ENCODE measurements at regions of chr6 and their contacts with region 1.

Region 1: GRCh38 chr6:42928986-42929820 is at the start of gene CNPY3:
- DNase-seq: peak; percentile 97
- ATAC-seq: peak; percentile 75
- H3K4me3 ChIP-seq: peak within 1 kb of the TSS; percentile 86 to 89 (median 87)
- H3K4me3 Mint-ChIP-seq: peak within 1 kb of the TSS; percentile 100
- H3K27ac ChIP-seq: peak within 1 kb of the TSS; percentile 94 to 97
- H3K27ac Mint-ChIP-seq: peak within 1 kb of the TSS; percentile 100
- H3K4me1 ChIP-seq: peaks cover 44 to 49% of the 10 kb centered on the region in 2 donors
- H3K4me1 Mint-ChIP-seq: peaks cover 49% of the 10 kb centered on the region
- H3K27me3 ChIP-seq: no peaks in the 10 kb centered on the region
- H3K27me3 Mint-ChIP-seq: no peaks in the 10 kb centered on the region
- CTCF ChIP-seq: no peak
- total RNA-seq, gene CNPY3: 159 and 163 TPM in 2 replicates

Region 2: GRCh38 chr6:42745707-42746462 is 183.3 kb before region 1 on chr6 and contains the start of gene TBCC:
- CTCF ChIA-PET with region 1: interaction called, 4 read pairs
- POLR2A ChIA-PET with region 1: interaction called, 21 read pairs
- intact Hi-C with region 1: loop called (anchors 1 kb)
- DNase-seq: peak; percentile 96
- ATAC-seq: peak; percentile 74
- H3K4me3 ChIP-seq: peak within 1 kb of the TSS; percentile 81 to 100 (median 90)
- H3K4me3 Mint-ChIP-seq: peak within 1 kb of the TSS; percentile 100
- H3K27ac ChIP-seq: peak within 1 kb of the TSS; percentile 78 to 91
- H3K27ac Mint-ChIP-seq: peak within 1 kb of the TSS; percentile 100
- H3K4me1 ChIP-seq: peaks cover 21 to 28% of the 10 kb centered on the region in 2 donors
- H3K4me1 Mint-ChIP-seq: peaks cover 35% of the 10 kb centered on the region
- H3K27me3 ChIP-seq: no peaks in the 10 kb centered on the region
- H3K27me3 Mint-ChIP-seq: no peaks in the 10 kb centered on the region
- CTCF ChIP-seq: no peak
- total RNA-seq, gene TBCC: 54.6 and 55.7 TPM in 2 replicates

Region 3: DNA sequence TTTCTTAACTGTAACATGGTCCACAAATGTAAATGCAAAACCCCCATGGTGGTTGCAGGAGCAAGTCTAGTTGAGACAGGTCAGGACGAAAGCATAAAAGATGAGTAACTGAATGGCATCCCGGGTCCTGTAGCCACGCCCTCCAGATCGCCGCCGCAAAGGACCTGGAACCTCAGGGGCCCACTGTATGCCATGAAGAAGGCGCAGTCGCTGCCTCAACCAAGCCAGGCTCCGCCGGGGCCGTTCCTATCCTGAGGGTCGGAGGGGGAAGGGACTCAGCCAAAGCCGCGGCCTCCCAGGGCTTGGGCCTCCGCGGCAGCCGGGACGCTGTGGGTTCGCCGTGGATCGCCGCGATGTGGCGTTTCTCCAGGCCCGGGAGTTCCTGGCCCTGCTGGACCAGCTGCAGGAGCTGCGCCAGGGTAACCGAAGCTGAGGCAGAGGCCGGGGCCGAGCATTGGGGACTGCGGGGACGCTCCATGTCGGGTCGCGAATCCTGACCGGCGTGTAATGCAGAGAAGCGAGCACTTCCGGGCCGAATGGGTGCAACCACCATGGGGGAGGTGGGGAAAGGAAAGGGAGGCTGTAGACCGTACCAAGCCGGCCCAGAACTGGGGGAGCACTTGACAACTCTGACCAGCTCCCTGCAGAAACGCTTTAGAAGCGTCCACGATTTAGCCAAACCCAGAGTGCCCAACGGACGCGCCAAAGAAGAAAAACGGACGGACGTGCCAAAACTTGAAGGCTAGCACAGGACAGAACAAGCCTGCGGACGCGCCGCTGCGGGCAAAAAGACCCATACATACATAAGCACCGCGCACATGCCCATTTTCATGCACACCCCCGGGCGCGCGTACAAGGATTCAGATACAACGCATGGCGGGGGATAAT is 38.6 kb before region 1 on chr6:
- CTCF ChIA-PET with region 1: interaction called, 4 read pairs
- POLR2A ChIA-PET with region 1: interaction called, 14 read pairs
- intact Hi-C with region 1: loop called (anchors 5 kb)
- DNase-seq: peak; percentile 93
- ATAC-seq: peak; percentile 98
- H3K4me3 ChIP-seq: peak overlapping the region; percentile 76 to 94 (median 87)
- H3K4me3 Mint-ChIP-seq: peak overlapping the region; percentile 92
- H3K27ac ChIP-seq: peak overlapping the region; percentile 77 to 89
- H3K27ac Mint-ChIP-seq: peak overlapping the region; percentile 92
- H3K4me1 ChIP-seq: peaks cover 26 to 33% of the 10 kb centered on the region in 2 donors
- H3K4me1 Mint-ChIP-seq: peaks cover 38% of the 10 kb centered on the region
- H3K27me3 ChIP-seq: no peaks in the 10 kb centered on the region
- H3K27me3 Mint-ChIP-seq: no peaks in the 10 kb centered on the region
- CTCF ChIP-seq: no peak

Region 4: GRCh38 chr6:42984001-42984923 is 55.1 kb after region 1 on chr6 and contains the start of gene PPP2R5D:
- CTCF ChIA-PET with region 1: interaction called, 8 read pairs
- POLR2A ChIA-PET with region 1: interaction called, 53 read pairs
- intact Hi-C with region 1: loop called (anchors 1 kb)
- DNase-seq: peak; percentile 98
- ATAC-seq: peak; percentile 95
- H3K4me3 ChIP-seq: peak within 1 kb of the TSS; percentile 54 to 96 (median 91)
- H3K4me3 Mint-ChIP-seq: peak within 1 kb of the TSS; percentile 89
- H3K27ac ChIP-seq: peak within 1 kb of the TSS; percentile 74 to 86
- H3K27ac Mint-ChIP-seq: peak within 1 kb of the TSS; percentile 95
- H3K4me1 ChIP-seq: peaks cover 18 to 30% of the 10 kb centered on the region in 2 donors
- H3K4me1 Mint-ChIP-seq: peaks cover 49% of the 10 kb centered on the region
- H3K27me3 ChIP-seq: no peaks in the 10 kb centered on the region
- H3K27me3 Mint-ChIP-seq: no peaks in the 10 kb centered on the region
- CTCF ChIP-seq: no peak
- total RNA-seq, gene PPP2R5D: 23.6 and 26.3 TPM in 2 replicates

Region 5: GRCh38 chr6:43053545-43054205 is 124.5 kb after region 1 on chr6 and contains the start of gene CUL7:
- CTCF ChIA-PET with region 1: no interaction called
- POLR2A ChIA-PET with region 1: interaction called, 11 read pairs
- intact Hi-C with region 1: no loop called
- DNase-seq: peak; percentile 85
- ATAC-seq: peak; percentile 98
- H3K4me3 ChIP-seq: peak within 1 kb of the TSS; percentile 24 to 84 (median 76)
- H3K4me3 Mint-ChIP-seq: peak within 1 kb of the TSS; percentile 94
- H3K27ac ChIP-seq: peak within 1 kb of the TSS; percentile 73 to 85
- H3K27ac Mint-ChIP-seq: peak within 1 kb of the TSS; percentile 95
- H3K4me1 ChIP-seq: peaks cover 22 to 25% of the 10 kb centered on the region in 2 donors
- H3K4me1 Mint-ChIP-seq: peaks cover 37% of the 10 kb centered on the region
- H3K27me3 ChIP-seq: no peaks in the 10 kb centered on the region
- H3K27me3 Mint-ChIP-seq: no peaks in the 10 kb centered on the region
- CTCF ChIP-seq: no peak
- total RNA-seq, gene CUL7: 21.4 and 22.7 TPM in 2 replicates

Region 6: GRCh38 chr6:43228951-43229802 is 300.0 kb after region 1 on chr6 and contains the start of gene DNPH1:
- CTCF ChIA-PET with region 1: no interaction called
- POLR2A ChIA-PET with region 1: interaction called, 5 read pairs
- intact Hi-C with region 1: loop called (anchors 1 kb)
- DNase-seq: peak; percentile 89
- ATAC-seq: peak; percentile 67
- H3K4me3 ChIP-seq: peak within 1 kb of the TSS; percentile 43 to 70 (median 61)
- H3K4me3 Mint-ChIP-seq: peak within 1 kb of the TSS; percentile 92
- H3K27ac ChIP-seq: peak within 1 kb of the TSS in 1 of 2 donors; percentile 73
- H3K27ac Mint-ChIP-seq: peak within 1 kb of the TSS; percentile 90
- H3K4me1 ChIP-seq: peaks cover 34 to 45% of the 10 kb centered on the region in 2 donors
- H3K4me1 Mint-ChIP-seq: peaks cover 29% of the 10 kb centered on the region
- H3K27me3 ChIP-seq: peaks cover 0 to 5% (median 0%) of the 10 kb centered on the region in 4 experiments
- H3K27me3 Mint-ChIP-seq: peaks cover 9% of the 10 kb centered on the region
- CTCF ChIP-seq: peak; percentile 95
- total RNA-seq, gene DNPH1: 25.8 and 29.0 TPM in 2 replicates

Region 7: GRCh38 chr6:43629505-43630300 is 700.5 kb after region 1 on chr6:
- CTCF ChIA-PET with region 1: no interaction called
- POLR2A ChIA-PET with region 1: no interaction called
- intact Hi-C with region 1: loop called (anchors 1 kb)
- DNase-seq: peak; percentile 95
- ATAC-seq: peak; percentile 66
- H3K4me3 ChIP-seq: peak overlapping the region; percentile 64 to 96 (median 90)
- H3K4me3 Mint-ChIP-seq: peak overlapping the region; percentile 100
- H3K27ac ChIP-seq: peak overlapping the region; percentile 70 to 84
- H3K27ac Mint-ChIP-seq: peak overlapping the region; percentile 99
- H3K4me1 ChIP-seq: peaks cover 22 to 33% of the 10 kb centered on the region in 2 donors
- H3K4me1 Mint-ChIP-seq: peaks cover 32% of the 10 kb centered on the region
- H3K27me3 ChIP-seq: no peaks in the 10 kb centered on the region
- H3K27me3 Mint-ChIP-seq: no peaks in the 10 kb centered on the region
- CTCF ChIP-seq: no peak